ENCODE measurements at regions of chr5 and their contacts with region 1.

Region 1: GRCh38 chr5:158695595-158696330 is 404.0 kb downstream of the EBF1 start:
- DNase-seq: peak; percentile 41
- H3K4me3 Mint-ChIP-seq: no peak overlapping the region
- H3K27ac Mint-ChIP-seq: no peak overlapping the region
- H3K4me1 Mint-ChIP-seq: peaks cover 2% of the 10 kb centered on the region
- H3K27me3 Mint-ChIP-seq: peaks cover 9% of the 10 kb centered on the region

Region 2: DNA sequence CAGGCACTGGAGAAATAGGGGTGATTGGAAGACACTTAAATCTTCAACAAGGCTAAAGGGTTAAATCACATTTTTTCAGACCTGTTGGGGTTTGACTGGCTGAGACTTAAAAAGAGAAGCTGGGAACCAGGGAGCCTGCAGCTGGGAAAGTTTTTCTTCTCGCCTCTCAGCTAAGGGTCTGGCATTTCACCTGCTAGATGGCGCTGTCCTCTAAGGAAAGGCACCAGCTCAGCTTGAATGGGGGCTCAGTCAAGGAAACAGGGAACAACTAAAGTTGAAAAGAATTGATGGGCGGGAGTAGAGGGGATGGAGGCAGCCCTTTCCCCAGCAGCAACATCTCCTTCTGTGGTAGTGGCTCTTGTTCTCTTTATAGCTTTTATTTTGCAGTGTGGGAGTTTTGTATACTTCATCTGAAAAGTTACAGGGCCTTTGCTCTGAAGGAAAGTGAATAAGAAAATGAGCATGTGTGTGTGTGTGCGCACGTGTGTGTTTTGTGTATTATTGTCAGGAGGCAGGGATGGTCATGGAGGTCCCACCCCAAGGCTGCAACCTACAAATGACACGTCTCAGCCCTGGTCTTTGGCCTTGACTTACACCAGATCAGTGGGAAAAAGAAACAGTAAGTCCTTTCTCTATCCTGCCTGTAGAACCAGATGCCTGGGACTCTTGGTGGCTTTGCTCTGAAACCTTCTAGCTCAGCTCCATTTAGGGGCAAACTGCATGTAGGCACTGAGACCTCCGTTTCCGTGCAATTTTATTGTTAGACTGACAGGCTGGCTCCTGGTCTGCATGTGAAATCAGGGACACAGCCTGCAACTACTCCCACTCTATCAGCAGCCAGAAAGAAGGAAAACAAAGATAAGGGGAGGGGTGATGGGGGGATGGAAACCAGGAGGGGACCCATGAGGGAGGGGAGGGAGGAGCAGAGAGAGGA is 520.6 kb before region 1 on chr5:
- intact Hi-C with region 1: loop called (anchors 5 kb)
- DNase-seq: peak; percentile 15
- H3K4me3 Mint-ChIP-seq: no peak overlapping the region
- H3K27ac Mint-ChIP-seq: no peak overlapping the region
- H3K4me1 Mint-ChIP-seq: no peaks in the 10 kb centered on the region
- H3K27me3 Mint-ChIP-seq: no peaks in the 10 kb centered on the region

Region 3: GRCh38 chr5:158739951-158740757 is 44.4 kb after region 1 on chr5:
- intact Hi-C with region 1: no loop called
- DNase-seq: no peak
- H3K4me3 Mint-ChIP-seq: no peak overlapping the region
- H3K27ac Mint-ChIP-seq: no peak overlapping the region
- H3K4me1 Mint-ChIP-seq: no peaks in the 10 kb centered on the region
- H3K27me3 Mint-ChIP-seq: peaks cover 4% of the 10 kb centered on the region

Region 4: DNA sequence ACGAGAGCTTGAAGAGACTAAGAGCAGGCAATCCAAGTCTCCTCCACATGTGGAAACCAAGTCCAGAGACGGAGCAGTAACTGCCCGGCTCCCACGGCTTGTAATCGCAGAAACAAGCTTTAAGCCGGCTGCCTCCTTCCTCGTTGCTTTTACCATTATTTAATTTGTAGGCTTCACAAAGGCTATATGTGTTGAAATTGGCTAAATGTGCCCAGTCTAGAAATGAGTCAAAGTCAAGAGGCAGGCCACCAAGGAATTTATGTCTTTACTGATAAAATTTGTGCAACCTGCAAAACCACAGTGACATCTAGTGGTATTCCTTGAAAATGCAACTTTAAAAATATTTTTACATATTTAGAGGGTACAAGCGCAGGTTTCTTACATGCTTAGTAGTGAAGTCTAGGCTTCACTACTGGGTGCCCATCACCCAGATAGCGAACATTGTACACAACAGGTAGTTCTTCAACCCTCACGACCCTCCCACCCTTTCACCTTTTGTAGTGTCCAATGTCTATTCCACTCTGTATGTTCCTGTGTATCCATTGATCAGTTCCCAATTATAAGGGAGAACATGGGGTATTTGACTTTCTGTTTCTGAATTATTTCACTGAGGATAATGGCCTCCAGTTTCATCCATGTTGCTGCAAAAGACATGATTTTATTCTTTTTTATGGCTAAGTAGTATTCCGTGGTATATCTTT is 437.4 kb after region 1 on chr5:
- intact Hi-C with region 1: loop called (anchors 1 kb)
- DNase-seq: no peak
- H3K4me3 Mint-ChIP-seq: no peak overlapping the region
- H3K27ac Mint-ChIP-seq: no peak overlapping the region
- H3K4me1 Mint-ChIP-seq: peaks cover 4% of the 10 kb centered on the region
- H3K27me3 Mint-ChIP-seq: peaks cover 24% of the 10 kb centered on the region

Measured in activated T-helper 2 cell treated with anti-CD3 and anti-CD28 coated beads, Interferon-gamma antibody, Interleukin-2, Interleukin-4, amounts not matched to agents 10 μg/mL and 5 μg/mL and 100 μg/mL, durations not matched to agents 14 hours and 24 hours and 36 hours (primary cell).